Sigmoid colon (tissue), 7 donors: ENCODE measurements at regions of chr7 and their contacts with region 1.

Region 1: GRCh38 chr7:107879400-107880035 is 11.5 kb upstream of the DLD start:
- DNase-seq: no peak
- H3K4me3 ChIP-seq: no peak overlapping the region
- H3K27ac ChIP-seq: no peak overlapping the region
- H3K4me1 ChIP-seq: peaks cover 0 to 12% (median 2%) of the 10 kb centered on the region in 4 donors
- H3K27me3 ChIP-seq: no peaks in the 10 kb centered on the region
- CTCF ChIP-seq: peak; percentile 66 to 76 (median 73)
- EP300 ChIP-seq: no peak
- POLR2A ChIP-seq: no peak

Region 2: DNA sequence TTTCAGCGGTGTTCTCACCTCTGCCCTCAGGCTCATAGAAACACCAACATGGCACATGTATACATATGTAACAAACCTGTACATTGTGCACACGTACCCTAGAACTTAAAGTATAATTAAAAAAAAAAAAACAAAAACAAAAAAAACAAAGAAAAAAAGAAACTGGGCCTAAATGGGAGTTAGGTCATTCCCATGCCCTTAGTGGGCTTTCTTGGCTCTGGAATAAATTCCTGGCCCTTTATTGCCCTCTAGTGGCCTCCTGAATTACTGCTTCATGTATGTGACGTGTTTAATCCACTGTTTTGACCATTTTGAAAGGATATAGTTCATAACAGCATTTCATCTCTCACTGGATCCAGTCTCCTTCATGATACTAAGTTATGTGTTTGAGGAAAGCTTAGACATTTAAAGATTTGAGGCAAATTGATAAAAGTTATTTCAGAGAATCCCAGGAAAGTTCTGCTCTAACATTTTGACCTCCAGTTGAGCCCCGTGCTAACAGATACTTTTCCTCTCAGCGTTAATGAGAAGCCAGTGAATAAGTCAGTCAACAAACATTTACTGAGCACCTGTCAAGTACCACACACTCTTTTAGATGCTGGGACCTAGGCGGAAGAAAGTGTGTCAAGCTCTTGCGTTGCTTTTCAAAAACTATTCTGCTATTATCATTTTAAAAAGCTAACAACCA is 1712.7 kb before region 1 on chr7:
- intact Hi-C with region 1: loop called (anchors 10 kb)
- DNase-seq: no peak
- H3K4me3 ChIP-seq: no peak overlapping the region
- H3K27ac ChIP-seq: peak overlapping the region; percentile 27 to 76 (median 54)
- H3K4me1 ChIP-seq: peaks cover 0 to 21% (median 17%) of the 10 kb centered on the region in 4 donors
- H3K27me3 ChIP-seq: no peaks in the 10 kb centered on the region
- CTCF ChIP-seq: peak; percentile 66 to 86 (median 79)
- EP300 ChIP-seq: no peak
- POLR2A ChIP-seq: no peak

Region 3: DNA sequence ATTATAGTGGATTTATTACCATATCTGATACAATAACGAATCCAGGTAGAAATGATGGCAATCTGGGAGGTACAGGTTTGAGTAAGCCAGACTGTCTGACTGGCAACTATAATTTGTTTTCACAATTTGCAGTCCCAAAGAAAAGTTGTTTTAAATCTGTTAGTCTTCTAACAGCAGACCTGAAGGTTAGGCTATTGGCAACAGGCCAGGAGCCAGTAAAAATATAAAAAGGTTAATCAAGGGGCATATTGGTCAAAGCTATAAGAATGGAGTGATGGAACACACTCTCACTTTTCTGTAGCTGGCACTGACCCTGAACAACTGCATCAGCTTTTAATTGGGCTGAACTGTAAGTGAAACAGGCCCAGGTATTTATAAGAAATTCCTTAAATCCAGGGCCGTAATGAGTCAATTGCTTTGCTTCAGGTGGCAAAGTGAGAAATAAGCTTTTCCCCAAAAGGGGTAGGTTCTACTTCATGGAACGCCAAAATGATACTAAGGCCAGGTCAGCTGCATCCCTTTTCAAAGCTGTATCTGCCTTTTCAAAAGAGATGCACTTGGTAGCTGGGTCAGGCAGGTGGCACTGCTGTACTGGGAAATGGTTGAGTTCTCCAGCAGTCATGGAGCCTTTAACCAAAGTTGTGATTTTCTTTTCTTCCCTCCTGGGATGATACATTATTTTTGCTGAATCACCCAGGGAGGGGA is 416.6 kb before region 1 on chr7:
- intact Hi-C with region 1: loop called (anchors 1 kb)
- DNase-seq: peak; percentile 80
- H3K4me3 ChIP-seq: no peak overlapping the region
- H3K27ac ChIP-seq: no peak overlapping the region
- H3K4me1 ChIP-seq: no peaks in the 10 kb centered on the region
- H3K27me3 ChIP-seq: no peaks in the 10 kb centered on the region
- CTCF ChIP-seq: peak; percentile 52 to 78 (median 66)
- EP300 ChIP-seq: no peak
- POLR2A ChIP-seq: no peak

Region 4: GRCh38 chr7:107579885-107580715 is 299.4 kb before region 1 on chr7 and contains the start of gene BCAP29:
- intact Hi-C with region 1: loop called (anchors 5 kb)
- DNase-seq: peak; percentile 84
- H3K4me3 ChIP-seq: peak within 1 kb of the TSS; percentile 60 to 92 (median 75)
- H3K27ac ChIP-seq: peak within 1 kb of the TSS; percentile 92 to 96 (median 94)
- H3K4me1 ChIP-seq: peaks cover 0 to 39% (median 25%) of the 10 kb centered on the region in 4 donors
- H3K27me3 ChIP-seq: no peaks in the 10 kb centered on the region
- CTCF ChIP-seq: peak in 1 of 4 experiments; percentile 4
- EP300 ChIP-seq: no peak
- POLR2A ChIP-seq: no peak
- total RNA-seq, gene BCAP29: 104 to 173 (median 137) TPM

Region 5: DNA sequence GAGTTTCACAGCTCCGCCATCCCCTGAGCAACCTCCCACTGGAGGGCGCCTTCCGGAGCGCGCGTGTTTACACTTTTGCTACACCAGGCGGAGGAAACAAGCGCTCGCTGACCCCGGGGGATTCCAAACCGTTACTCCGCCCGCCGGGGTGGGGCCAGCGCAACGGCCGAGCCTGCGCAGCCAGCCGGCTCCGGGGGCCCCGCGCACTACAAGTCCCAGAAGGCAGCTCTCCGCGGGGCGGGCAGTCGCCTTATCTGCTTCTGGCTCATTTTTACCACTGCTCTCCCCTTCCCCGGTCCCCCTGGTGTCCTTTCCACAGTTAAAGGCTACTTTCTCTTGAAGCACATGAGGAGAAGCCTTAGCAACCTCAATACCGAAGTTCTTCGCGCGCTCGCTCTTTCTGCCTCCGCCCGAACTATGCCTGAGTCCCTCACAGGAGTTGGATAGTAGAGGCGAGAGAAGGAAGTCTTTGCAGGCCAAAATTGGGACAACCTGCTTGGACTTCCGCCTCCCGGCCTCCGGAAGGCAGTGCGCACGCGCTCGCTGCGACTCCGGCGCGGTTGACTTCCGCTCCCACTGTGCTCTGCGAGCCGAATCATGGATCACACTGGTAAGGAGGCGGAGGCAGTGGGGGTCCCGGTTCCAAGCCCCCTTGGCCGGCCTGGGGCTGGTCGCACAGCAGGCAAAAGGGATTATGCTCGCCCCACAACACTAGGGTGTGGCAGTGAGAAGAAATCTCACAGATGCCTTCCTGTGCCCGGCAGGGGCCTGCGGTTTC is 135.8 kb before region 1 on chr7 and contains the start of gene CBLL1:
- intact Hi-C with region 1: loop called (anchors 1 kb)
- DNase-seq: peak; percentile 98
- H3K4me3 ChIP-seq: peak within 1 kb of the TSS; percentile 72 to 91 (median 82)
- H3K27ac ChIP-seq: peak within 1 kb of the TSS; percentile 84 to 97 (median 92)
- H3K4me1 ChIP-seq: peaks cover 0 to 49% (median 40%) of the 10 kb centered on the region in 4 donors
- H3K27me3 ChIP-seq: no peaks in the 10 kb centered on the region
- CTCF ChIP-seq: peak; percentile 52 to 86 (median 74)
- EP300 ChIP-seq: no peak
- POLR2A ChIP-seq: peak; percentile 39 to 86
- total RNA-seq, gene CBLL1: 25.2 to 47.4 (median 38.9) TPM

Region 6: DNA sequence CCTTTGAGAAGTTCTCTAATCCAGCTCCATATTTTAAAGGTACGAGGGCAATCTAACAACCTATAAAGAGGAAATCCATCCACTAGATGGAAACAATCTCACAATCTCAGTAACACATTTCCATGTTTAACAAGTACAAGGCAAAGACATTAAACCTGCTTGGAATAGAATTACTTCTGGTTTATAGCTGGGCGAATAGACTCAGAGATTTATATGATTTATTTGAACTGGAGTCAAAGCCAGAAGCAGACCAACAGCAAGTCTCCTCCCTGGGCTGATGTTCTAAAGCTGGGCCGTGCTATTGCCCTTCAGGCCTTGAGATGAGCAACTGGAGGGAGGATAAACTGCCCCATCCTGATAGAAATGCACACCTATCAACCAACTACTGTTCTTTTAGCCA is 101.8 kb before region 1 on chr7:
- intact Hi-C with region 1: loop called (anchors 1 kb)
- DNase-seq: peak; percentile 83
- H3K4me3 ChIP-seq: no peak overlapping the region
- H3K27ac ChIP-seq: peak overlapping the region in 3 of 4 donors; percentile 71 to 80 (median 78)
- H3K4me1 ChIP-seq: peaks cover 0 to 56% (median 40%) of the 10 kb centered on the region in 4 donors
- H3K27me3 ChIP-seq: no peaks in the 10 kb centered on the region
- CTCF ChIP-seq: peak in 2 of 4 experiments; percentile 15 to 44
- EP300 ChIP-seq: peak in 3 of 4 donors; percentile 16 to 31 (median 23)
- POLR2A ChIP-seq: no peak

Region 7: DNA sequence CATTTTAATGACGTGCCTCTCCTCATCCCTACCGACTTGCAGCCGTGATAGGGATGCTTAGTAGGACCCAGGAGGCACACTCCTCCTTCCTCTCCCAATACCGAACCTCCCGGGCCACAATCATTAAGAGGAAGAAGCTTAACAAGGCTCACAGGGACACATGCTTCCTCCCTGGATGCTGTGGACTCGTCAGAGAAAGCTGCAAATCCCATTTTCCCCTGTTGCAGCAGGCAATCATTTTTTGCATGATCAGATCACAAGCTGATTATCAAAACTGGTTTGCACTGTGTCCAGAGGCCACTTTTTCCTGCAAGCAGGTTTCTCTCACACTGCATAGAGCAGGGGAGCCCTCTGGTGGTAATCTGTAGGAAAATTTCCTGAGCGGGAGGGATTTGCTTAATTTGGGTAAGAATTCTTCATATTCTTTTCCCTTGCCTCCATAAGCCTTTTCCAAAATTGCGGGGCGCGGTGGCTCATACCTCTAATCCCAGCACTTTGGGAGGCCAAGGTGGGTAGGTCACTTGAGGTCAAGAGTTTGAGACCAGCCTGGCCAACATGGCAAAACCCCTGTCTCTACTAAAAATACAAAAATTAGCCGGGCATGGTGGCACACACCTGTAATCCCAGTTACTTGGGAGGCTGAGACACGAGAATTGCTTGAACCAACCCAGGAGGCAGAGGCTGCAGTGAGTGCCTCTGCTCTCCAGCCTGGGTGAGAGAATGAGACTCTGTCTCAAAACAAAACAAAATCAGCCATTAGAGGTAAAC is 266.7 kb after region 1 on chr7:
- intact Hi-C with region 1: loop called (anchors 5 kb)
- DNase-seq: peak; percentile 78
- H3K4me3 ChIP-seq: peak overlapping the region in 3 of 4 donors; percentile 13 to 31 (median 28)
- H3K27ac ChIP-seq: peak overlapping the region in 2 of 4 donors; percentile 16 to 41
- H3K4me1 ChIP-seq: peaks cover 0 to 26% (median 16%) of the 10 kb centered on the region in 4 donors
- H3K27me3 ChIP-seq: no peaks in the 10 kb centered on the region
- CTCF ChIP-seq: peak; percentile 80 to 93 (median 88)
- EP300 ChIP-seq: no peak
- POLR2A ChIP-seq: no peak